Ovary (tissue), 10 donors: ENCODE measurements at regions of chr4 and their contacts with region 1.

Region 1: DNA sequence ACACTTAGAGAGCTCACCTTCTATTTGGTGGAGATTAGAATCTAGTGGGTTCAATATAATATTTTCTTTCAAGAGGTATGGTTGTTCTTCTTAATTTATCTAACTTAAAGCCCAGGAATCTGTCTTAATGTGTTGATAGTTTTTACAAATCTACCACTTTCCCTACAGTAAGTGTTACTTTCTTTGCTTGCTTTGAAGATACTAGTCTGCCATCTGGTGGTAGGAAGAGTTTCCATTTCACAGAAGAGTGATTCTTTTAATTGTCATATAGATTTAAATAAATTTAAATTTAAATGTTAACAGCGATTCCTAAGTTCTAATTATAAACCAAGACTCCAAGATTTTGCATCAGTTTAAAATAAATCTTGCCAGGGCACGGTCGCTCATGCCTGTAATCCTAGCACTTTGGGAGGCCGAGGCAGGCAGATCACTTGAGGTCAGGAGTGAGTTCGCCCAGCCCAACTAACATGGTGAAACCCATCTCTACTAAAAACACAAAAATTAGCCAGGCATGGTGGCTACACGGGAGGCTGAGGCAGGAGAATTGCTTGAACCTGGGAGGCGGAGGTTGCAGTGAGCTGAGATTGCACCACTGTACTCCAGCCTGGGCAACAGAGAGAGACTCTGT is 43.5 kb downstream of the NUDT9 start:
- DNase-seq: no peak
- H3K4me3 ChIP-seq: no peak overlapping the region
- H3K27ac ChIP-seq: no peak overlapping the region
- H3K4me1 ChIP-seq: no peaks in the 10 kb centered on the region
- H3K27me3 ChIP-seq: no peaks in the 10 kb centered on the region
- CTCF ChIP-seq: peak; percentile 25 to 68 (median 38)
- EP300 ChIP-seq: no peak
- POLR2A ChIP-seq: no peak

Region 2: DNA sequence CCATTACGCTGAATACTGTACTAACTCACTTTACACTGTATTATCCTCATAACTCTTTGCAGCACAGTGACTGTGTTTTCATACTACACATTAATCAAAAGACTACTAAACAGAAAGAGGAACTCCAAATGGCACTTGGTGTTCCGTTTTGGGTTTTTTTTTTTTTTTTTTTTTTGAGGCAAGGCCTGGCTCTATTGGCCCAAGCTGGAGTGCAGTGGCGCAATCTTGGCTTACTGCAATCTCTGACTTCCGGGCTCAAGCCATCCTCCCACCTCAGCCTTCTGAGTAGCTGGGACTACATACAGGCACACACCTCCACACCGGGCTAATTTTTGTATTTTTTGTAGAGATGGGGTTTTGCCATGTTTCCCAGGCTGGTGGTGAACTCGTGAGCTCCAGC is 256.2 kb before region 1 on chr4:
- intact Hi-C with region 1: no loop called
- DNase-seq: peak in 2 of 5 donors; percentile 28 to 43
- H3K4me3 ChIP-seq: no peak overlapping the region
- H3K27ac ChIP-seq: no peak overlapping the region
- H3K4me1 ChIP-seq: peaks cover 4% of the 10 kb centered on the region
- H3K27me3 ChIP-seq: no peaks in the 10 kb centered on the region
- CTCF ChIP-seq: no peak
- EP300 ChIP-seq: no peak
- POLR2A ChIP-seq: no peak

Region 3: DNA sequence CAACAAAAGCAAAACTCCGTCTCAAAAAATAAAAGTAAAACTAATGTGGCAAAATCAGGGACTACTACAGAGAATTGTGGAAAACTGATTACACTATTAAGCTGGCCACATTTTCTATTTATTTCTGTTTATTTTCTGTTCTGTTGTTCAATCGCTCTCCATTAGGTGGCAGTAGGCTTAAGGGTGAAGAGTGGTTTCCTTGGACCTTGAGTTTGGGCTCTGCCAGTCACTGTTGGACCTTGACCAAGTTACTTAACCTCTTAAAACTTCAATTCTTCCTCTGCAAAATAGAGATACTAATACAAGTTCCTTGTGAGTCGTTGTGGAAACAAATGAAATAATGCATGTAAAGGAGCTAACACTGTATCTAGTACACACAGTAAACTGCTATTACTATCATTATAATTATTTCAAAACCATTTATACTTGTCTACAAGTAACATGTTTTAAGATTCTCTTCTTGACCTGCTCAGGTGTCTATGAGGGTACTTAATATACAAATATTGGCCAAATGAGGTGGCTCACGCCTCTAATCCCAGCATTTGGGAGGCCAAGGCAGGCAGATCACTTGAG is 90.0 kb before region 1 on chr4:
- intact Hi-C with region 1: loop called in 2 of 4 experiments (anchors 5 kb)
- DNase-seq: peak in 3 of 5 donors; percentile 21 to 55 (median 37)
- H3K4me3 ChIP-seq: no peak overlapping the region
- H3K27ac ChIP-seq: no peak overlapping the region
- H3K4me1 ChIP-seq: no peaks in the 10 kb centered on the region
- H3K27me3 ChIP-seq: no peaks in the 10 kb centered on the region
- CTCF ChIP-seq: peak; percentile 65 to 68 (median 67)
- EP300 ChIP-seq: no peak
- POLR2A ChIP-seq: no peak